ENCODE measurements at regions of chr4 and their contacts with region 1.

Region 1: DNA sequence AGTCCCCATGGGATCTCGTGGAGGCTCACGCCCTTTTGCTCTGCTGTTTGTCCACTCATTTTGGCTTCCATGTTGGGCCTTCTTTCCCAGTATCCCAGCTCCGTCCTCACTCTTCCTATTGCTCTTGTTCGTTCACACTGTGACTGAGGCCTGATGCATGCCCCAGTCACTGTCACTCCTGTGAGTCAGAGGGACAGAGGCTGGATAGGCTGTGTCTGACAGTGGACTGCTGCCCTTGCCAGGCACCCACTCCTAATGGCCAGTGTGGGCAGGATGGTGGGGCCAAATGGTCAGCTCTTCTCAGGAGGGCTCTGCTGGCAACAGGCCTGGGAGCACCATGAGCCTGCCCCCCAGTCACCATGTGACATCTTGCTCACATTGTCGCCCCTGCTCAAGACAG is 40.0 kb downstream of the HADH start:
- DNase-seq: no peak
- CTCF ChIP-seq: no peak

Region 2: GRCh38 chr4:108172753-108173598 is 143.2 kb after region 1 on chr4:
- in situ Hi-C with region 1: loop called (anchors 10 kb)
- DNase-seq: peak; percentile 82
- CTCF ChIP-seq: no peak

Region 3: DNA sequence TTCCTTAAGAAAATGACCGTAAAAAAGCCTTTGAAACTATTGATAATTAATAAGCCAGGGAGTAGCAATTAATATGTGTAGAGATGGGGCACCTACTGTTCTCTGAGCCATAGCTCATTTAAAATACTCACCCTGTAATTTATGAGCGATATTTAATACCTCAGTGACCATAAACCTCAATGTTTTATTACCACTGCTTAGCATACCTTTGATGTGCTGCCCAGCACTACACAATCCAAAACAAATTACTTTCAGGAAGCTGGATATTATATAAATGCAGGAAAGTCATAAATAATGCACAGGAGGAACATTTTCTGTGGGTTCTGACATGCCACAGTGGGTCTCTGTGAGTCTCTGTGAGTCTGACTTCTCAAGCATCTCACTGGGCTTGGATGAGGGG is 424.5 kb after region 1 on chr4:
- in situ Hi-C with region 1: no loop called
- DNase-seq: no peak
- CTCF ChIP-seq: no peak

Region 4: GRCh38 chr4:108570993-108571569 is 541.4 kb after region 1 on chr4:
- in situ Hi-C with region 1: loop called (anchors 10 kb)
- DNase-seq: no peak
- CTCF ChIP-seq: no peak

Measured in GM13976 (cell line).